H1 (cell line): ENCODE measurements at regions of chr2 and their contacts with region 1.

Region 1: DNA sequence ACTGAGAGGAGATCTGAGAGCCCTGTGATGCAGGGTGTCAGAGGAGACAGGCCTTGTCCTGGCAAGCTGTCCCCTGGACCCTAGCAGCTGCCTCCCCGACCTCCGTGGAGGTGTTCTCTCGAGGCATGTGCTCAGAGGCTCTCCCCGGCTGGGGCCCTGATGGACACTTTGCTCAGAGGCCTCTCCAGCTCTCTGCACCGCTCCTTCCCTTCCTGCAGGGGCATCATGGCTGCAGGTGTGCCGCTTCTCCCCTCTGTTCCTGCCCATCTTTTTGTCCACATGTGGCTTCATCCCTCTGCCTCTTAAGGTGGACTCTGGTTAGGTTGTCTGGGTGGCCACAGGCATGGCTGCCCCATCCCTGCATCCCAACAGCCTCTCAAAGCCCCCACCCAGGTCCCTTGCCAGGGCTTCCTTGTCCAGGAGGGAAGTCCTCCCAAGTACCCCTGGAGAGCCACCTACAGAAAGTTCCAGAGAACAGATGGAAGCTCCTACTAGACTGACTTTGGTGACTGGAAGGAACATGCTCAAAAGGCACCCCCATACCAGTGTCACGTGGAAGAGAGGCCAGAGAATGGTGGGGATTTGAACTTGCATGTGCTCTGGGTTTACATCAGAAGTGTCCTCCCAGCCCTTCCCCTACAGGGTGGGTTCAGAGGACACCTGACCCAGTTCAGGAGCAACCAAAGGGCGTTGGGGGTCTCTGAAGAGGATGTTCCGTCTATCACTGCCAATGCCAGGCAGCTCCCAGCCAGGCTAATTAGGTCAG is 120.4 kb downstream of the KLHL29 start:
- DNase-seq: no peak
- H3K4me3 ChIP-seq: no peak overlapping the region
- H3K27ac ChIP-seq: no peak overlapping the region
- H3K4me1 ChIP-seq: peaks cover 0 to 4% (median 0%) of the 10 kb centered on the region in 4 experiments; a peak in 5 of 7 replicates
- H3K27me3 ChIP-seq: no peaks in the 10 kb centered on the region
- CTCF ChIP-seq: peak in 2 of 3 experiments; percentile 33 to 37; a peak in 2 of 4 replicates
- EP300 ChIP-seq: no peak
- POLR2A ChIP-seq: no peak
- RAD21 ChIP-seq: no peak; a peak in 1 of 4 replicates

Region 2: GRCh38 chr2:23323917-23324680 is 181.3 kb before region 1 on chr2:
- CTCF ChIA-PET with region 1: no interaction called
- POLR2A ChIA-PET with region 1: no interaction called
- DNase-seq: no peak
- H3K4me3 ChIP-seq: no peak overlapping the region
- H3K27ac ChIP-seq: no peak overlapping the region
- H3K4me1 ChIP-seq: 0 out of 7 replicates have a peak, but pooled peaks cover 0 to 2% (median 0%) of the 10 kb centered on the region in 4 experiments
- H3K27me3 ChIP-seq: no peaks in the 10 kb centered on the region; a peak in 1 of 7 replicates
- CTCF ChIP-seq: no peak
- EP300 ChIP-seq: no peak
- POLR2A ChIP-seq: no peak
- RAD21 ChIP-seq: no peak

Region 3: GRCh38 chr2:23452853-23453420 is 52.5 kb before region 1 on chr2:
- CTCF ChIA-PET with region 1: no interaction called
- POLR2A ChIA-PET with region 1: no interaction called
- DNase-seq: no peak
- H3K4me3 ChIP-seq: no peak overlapping the region
- H3K27ac ChIP-seq: no peak overlapping the region
- H3K4me1 ChIP-seq: peaks cover 0 to 5% (median 0%) of the 10 kb centered on the region in 4 experiments; a peak in 1 of 7 replicates
- H3K27me3 ChIP-seq: no peaks in the 10 kb centered on the region; a peak in 1 of 7 replicates
- CTCF ChIP-seq: no peak
- EP300 ChIP-seq: no peak
- POLR2A ChIP-seq: no peak
- RAD21 ChIP-seq: no peak

Region 4: DNA sequence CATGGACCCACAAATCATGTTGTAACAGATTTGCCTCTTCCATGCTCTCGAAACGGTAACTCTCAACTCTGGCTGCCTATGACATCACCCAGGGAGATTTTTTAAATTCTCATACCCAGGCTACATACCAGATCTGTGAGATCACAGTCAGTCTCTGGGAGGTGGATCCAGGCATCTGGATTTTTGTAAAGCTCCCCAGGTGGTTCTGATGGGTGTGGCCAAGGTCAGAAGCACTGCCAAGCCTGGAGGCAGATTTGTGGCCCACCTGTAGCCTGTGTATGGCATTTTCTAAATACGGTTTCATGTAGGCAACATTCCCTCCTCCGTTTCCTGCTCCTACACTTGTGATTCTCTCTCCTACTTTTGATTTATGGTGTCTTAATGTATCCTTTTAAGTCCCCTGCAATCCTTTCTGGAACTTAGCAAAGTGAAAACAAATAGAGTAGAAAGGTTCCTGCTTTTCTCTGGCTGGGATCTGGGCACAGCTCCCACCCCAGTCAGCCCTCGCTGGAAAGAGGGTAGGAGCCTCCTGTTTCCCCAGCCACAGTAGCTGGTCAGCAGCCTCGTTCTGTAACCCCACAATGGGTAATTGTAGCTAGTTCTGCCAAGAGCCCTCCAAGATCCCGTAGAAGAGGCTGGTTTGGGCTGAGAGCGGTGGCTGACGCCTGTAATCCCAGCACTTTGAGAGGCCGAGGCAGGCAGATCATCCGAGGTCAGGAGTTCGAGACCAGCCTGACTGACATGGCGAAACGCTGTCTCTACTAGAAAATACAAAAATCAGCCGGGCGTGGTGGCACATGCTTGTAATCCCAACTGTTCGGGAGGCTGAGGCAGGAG is 24.2 kb before region 1 on chr2:
- CTCF ChIA-PET with region 1: interaction called, 23 read pairs
- POLR2A ChIA-PET with region 1: no interaction called
- DNase-seq: peak in 1 of 2 experiments; percentile 82
- H3K4me3 ChIP-seq: no peak overlapping the region
- H3K27ac ChIP-seq: no peak overlapping the region; the same call in 1 of the 2 replicates
- H3K4me1 ChIP-seq: peaks cover 5 to 30% (median 13%) of the 10 kb centered on the region in 4 experiments
- H3K27me3 ChIP-seq: 0 out of 7 replicates have a peak, but pooled peaks cover 0 to 2% (median 0%) of the 10 kb centered on the region in 4 experiments
- CTCF ChIP-seq: no peak
- EP300 ChIP-seq: no peak
- POLR2A ChIP-seq: no peak
- RAD21 ChIP-seq: no peak

Region 5: DNA sequence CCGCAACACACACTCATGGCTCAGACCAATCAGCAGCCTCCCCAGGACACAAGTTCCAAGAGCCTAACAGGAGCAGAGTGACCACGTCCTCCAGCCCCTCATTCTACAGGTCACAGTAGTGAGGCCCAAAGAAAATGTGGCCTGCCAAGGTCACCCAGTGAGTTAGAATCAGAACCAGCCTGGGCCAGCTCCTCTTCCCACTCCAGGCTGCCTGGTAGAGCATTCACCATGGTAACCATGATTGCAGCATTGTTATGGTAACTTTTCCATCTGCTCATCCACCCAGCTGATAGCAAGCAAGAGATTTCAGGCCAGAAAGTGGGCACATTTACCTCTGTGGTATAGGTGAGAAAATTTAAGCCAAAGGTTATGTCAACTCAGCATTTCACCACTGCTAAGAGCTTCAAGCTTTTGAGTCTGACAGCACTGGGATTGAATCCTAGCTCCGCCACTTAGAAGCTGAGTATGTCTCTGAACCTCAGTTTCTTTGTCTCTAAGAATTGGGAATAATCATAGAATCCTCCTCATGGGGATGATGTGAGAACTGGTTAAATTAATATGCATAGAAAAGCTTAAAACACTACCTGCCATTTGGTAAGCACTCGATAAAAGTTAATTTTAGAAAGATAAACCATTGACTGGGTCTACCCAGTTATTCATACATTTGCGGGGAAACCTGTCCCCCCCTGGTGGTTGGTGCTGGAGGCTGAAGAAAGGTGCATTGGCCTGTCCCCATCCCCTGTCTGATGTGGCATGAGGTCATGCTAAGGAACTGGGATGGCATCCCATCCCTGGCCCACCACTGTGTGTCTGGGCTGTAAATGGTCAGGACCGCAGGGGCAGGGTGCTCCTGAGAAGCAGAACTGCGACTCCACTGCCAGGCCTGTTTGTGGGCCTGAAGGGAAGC is 61.1 kb after region 1 on chr2:
- CTCF ChIA-PET with region 1: interaction called, 12 read pairs
- POLR2A ChIA-PET with region 1: no interaction called
- DNase-seq: peak; percentile 31 to 80
- H3K4me3 ChIP-seq: no peak overlapping the region
- H3K27ac ChIP-seq: no peak overlapping the region
- H3K4me1 ChIP-seq: peaks cover 0 to 10% (median 8%) of the 10 kb centered on the region in 4 experiments; a peak in 4 of 7 replicates
- H3K27me3 ChIP-seq: no peaks in the 10 kb centered on the region
- CTCF ChIP-seq: peak; percentile 52 to 88 (median 82)
- EP300 ChIP-seq: no peak
- POLR2A ChIP-seq: no peak
- RAD21 ChIP-seq: peak; percentile 61 to 71

Region 6: DNA sequence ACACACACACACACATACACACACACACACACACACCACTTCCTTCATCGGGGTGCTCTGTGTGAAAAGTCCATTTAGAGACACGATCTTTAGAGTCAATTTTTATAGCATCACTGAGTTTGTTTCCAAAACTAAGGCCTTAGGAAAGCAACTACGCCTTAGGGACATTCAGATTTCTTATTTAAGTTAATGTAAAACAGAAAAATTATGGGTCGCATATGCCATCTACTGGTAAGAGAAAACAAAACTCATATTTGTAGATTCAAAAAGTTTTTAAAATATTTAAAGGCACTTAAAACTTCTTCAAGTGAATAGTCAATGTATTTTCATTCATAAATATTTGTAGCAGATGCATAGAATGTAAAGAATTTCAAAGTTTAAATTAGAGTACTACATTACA is 255.3 kb after region 1 on chr2:
- CTCF ChIA-PET with region 1: no interaction called
- POLR2A ChIA-PET with region 1: no interaction called
- DNase-seq: no peak
- H3K4me3 ChIP-seq: no peak overlapping the region
- H3K27ac ChIP-seq: no peak overlapping the region
- H3K4me1 ChIP-seq: no peaks in the 10 kb centered on the region
- H3K27me3 ChIP-seq: no peaks in the 10 kb centered on the region
- CTCF ChIP-seq: no peak
- EP300 ChIP-seq: no peak
- POLR2A ChIP-seq: no peak
- RAD21 ChIP-seq: peak in 1 of 2 experiments; percentile 28; a peak in 2 of 4 replicates